ENCODE measurements at regions of chr15 and their contacts with region 1.

Region 1: GRCh38 chr15:74950078-74951000 is 6.2 kb downstream of the RPP25 start:
- DNase-seq: peak in 5 of 6 donors; percentile 58 to 85 (median 75)
- ATAC-seq: peak; percentile 70 to 96 (median 89)
- H3K4me3 ChIP-seq: no peak overlapping the region
- H3K27ac ChIP-seq: no peak overlapping the region
- H3K4me1 ChIP-seq: peaks cover 0 to 11% (median 8%) of the 10 kb centered on the region in 3 donors
- H3K27me3 ChIP-seq: no peaks in the 10 kb centered on the region
- CTCF ChIP-seq: peak; percentile 88 to 94 (median 92)

Region 2: GRCh38 chr15:74768771-74769342 is 181.5 kb before region 1 on chr15:
- intact Hi-C with region 1: loop called (anchors 5 to 10 kb)
- DNase-seq: peak in 4 of 6 donors; percentile 39 to 81 (median 68)
- ATAC-seq: peak; percentile 54 to 79 (median 78)
- H3K4me3 ChIP-seq: no peak overlapping the region
- H3K27ac ChIP-seq: no peak overlapping the region
- H3K4me1 ChIP-seq: no peaks in the 10 kb centered on the region
- H3K27me3 ChIP-seq: no peaks in the 10 kb centered on the region
- CTCF ChIP-seq: peak; percentile 51 to 85 (median 74)

Region 3: GRCh38 chr15:74781431-74782258 is 168.7 kb before region 1 on chr15 and contains the start of gene CSK:
- intact Hi-C with region 1: loop called in 1 of 3 experiments (anchors 10 kb)
- DNase-seq: peak; percentile 57 to 91 (median 82)
- ATAC-seq: peak; percentile 78 to 88 (median 82)
- H3K4me3 ChIP-seq: peak within 1 kb of the TSS; percentile 53 to 79 (median 70)
- H3K27ac ChIP-seq: peak within 1 kb of the TSS in 3 of 4 donors; percentile 44 to 54 (median 46)
- H3K4me1 ChIP-seq: peaks cover 0 to 20% (median 3%) of the 10 kb centered on the region in 3 donors
- H3K27me3 ChIP-seq: no peaks in the 10 kb centered on the region
- CTCF ChIP-seq: peak; percentile 24 to 56 (median 40)
- total RNA-seq, gene CSK: 8.5 to 35.1 (median 14.1) TPM

Region 4: GRCh38 chr15:75019916-75020315 is 69.6 kb after region 1 on chr15:
- intact Hi-C with region 1: no loop called
- DNase-seq: no peak
- ATAC-seq: no peak
- H3K4me3 ChIP-seq: no peak overlapping the region
- H3K27ac ChIP-seq: no peak overlapping the region
- H3K4me1 ChIP-seq: peaks cover 0 to 10% (median 0%) of the 10 kb centered on the region in 3 donors
- H3K27me3 ChIP-seq: no peaks in the 10 kb centered on the region
- CTCF ChIP-seq: no peak

Region 5: DNA sequence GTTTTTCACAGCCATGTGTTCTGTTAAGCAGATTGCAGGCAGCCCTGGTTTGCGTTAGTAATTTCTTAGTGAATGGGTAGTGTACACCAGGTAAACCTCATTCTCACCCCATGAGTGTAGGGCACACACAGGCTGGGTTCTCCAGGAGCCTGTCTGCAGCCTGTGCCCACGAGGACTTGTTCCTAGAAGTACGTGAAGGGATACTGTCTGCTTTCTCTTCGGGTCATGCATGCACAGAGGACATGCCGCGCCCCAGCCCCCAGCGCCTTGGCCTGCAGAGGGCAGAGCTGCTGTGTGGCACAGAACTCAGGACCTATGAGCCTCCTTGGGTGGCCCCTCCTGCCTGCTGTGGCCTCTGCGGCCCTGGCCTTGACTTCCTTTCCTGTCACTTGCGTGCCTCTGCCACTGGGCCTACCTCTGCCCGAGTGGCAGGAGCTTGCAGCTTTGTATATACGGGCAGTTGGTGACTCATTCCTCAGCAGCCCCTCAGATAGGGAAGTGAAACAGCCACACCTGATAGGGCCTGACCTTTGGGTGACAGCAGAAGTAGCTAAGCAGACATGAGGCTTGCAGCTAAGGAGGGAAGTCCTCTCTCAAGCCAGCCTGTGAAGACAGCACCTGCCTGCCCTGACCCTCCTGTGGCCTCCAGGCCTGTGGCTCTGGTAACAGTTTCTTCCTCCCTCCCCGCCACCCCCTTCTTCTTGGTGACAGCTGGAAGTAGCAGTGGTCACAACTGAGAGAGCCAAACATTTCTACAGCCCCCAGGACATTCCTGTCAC is 92.6 kb after region 1 on chr15:
- intact Hi-C with region 1: no loop called
- DNase-seq: peak; percentile 83 to 91 (median 85)
- ATAC-seq: peak; percentile 73 to 83 (median 78)
- H3K4me3 ChIP-seq: peak overlapping the region in 1 of 4 donors; percentile 26
- H3K27ac ChIP-seq: peak overlapping the region; percentile 81 to 93 (median 86)
- H3K4me1 ChIP-seq: peaks cover 35 to 53% (median 42%) of the 10 kb centered on the region in 3 donors
- H3K27me3 ChIP-seq: no peaks in the 10 kb centered on the region
- CTCF ChIP-seq: peak; percentile 33 to 43 (median 40)